HepG2 (cell line): ENCODE measurements at regions of chr14 and their contacts with region 1.

Region 1: DNA sequence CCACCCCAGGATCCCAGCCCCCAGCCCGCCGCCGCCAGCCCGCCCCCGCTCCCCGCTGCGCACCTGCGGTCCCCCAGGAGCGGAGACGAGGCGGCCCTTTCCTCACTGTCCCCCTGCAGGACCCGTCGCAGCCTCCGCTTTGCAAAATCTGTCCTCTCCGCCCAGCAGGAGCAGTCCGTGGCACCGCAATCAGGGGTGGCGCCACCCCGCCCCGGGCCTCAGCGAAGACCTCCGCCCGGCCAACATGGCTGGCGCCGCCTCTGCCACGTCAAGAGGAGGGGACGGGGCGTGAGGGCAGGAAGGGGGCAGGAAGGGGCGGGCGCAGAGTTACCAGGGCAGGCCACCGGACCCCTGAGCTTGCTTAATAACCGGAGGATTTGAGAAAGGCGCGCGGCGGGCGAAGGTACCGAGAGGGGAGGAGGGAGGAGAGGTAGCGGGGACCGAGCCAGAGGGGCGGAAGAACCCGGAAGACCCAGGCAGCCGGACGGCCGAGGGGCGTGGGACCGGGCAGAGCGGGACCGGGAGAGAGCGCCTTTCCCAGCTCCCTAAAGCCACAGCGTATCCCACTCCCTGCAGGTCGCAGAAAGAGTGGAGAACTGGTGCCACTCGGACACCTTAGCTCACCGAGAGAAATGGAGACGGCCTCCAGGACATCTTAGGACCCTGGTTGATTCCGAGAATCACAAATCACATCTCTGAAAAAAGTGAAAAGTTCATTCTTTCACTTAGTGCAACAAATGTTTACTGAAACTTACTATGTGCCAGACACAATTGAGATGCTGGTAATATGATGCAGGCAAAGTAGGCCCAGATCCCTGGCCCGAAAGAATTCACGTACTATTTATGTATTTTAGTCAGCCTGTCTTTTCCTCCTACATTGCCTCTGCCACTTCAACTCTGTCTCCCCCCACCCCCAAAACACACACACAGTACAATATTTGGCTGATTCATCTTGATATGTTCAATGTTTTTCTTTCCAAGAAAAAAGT is at the start of gene SEC23A:
- DNase-seq: peak; percentile 99
- ATAC-seq: peak; percentile 94
- H3K4me3 ChIP-seq: peak within 1 kb of the TSS; percentile 81 to 91 (median 90)
- H3K27ac ChIP-seq: peak within 1 kb of the TSS; percentile 94
- H3K4me1 ChIP-seq: peaks cover 62% of the 10 kb centered on the region
- H3K27me3 ChIP-seq: no peaks in the 10 kb centered on the region; a peak in 1 of 5 replicates
- CTCF ChIP-seq: peak; percentile 69
- EP300 ChIP-seq: peak; percentile 72 to 80; a peak in 3 of 4 replicates
- POLR2A ChIP-seq: peak; percentile 90 to 92
- RAD21 ChIP-seq: peak; percentile 78
- total RNA-seq, gene SEC23A: 887 and 1,365 TPM in 2 replicates

Region 2: GRCh38 chr14:39034481-39035296 is 68.6 kb before region 1 on chr14:
- CTCF ChIA-PET with region 1: no interaction called
- POLR2A ChIA-PET with region 1: interaction called, 13 read pairs
- in situ Hi-C with region 1: no loop called
- intact Hi-C with region 1: no loop called
- DNase-seq: peak; percentile 66
- ATAC-seq: peak; percentile 78
- H3K4me3 ChIP-seq: no peak overlapping the region
- H3K27ac ChIP-seq: no peak overlapping the region
- H3K4me1 ChIP-seq: no peaks in the 10 kb centered on the region
- H3K27me3 ChIP-seq: no peaks in the 10 kb centered on the region
- CTCF ChIP-seq: peak; percentile 75
- EP300 ChIP-seq: no peak
- POLR2A ChIP-seq: no peak
- RAD21 ChIP-seq: peak; percentile 66; the same call in 1 of the 2 replicates

Region 3: DNA sequence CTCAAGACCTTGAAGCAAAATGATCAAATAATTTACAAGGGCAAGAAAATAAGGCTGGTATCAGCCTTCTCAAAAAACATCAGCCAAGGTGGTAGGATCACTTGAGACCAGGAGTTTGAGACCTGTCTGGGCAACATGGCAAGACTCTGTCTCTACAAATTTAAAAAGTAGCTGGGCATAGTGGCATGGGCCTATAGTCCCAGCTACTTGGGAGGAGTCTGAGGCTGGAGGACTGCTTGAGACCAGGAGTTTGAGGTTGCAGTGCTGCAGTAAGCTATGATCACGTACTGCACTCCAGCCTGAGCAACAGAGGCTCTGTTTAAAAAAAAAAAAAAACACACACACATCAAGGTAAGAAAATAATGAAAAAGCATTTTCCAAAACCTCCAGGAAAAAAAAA is 22.4 kb before region 1 on chr14:
- CTCF ChIA-PET with region 1: no interaction called
- POLR2A ChIA-PET with region 1: interaction called, 34 read pairs
- in situ Hi-C with region 1: no loop called
- intact Hi-C with region 1: no loop called
- DNase-seq: no peak
- ATAC-seq: no peak
- H3K4me3 ChIP-seq: no peak overlapping the region
- H3K27ac ChIP-seq: no peak overlapping the region
- H3K4me1 ChIP-seq: no peaks in the 10 kb centered on the region
- H3K27me3 ChIP-seq: no peaks in the 10 kb centered on the region
- CTCF ChIP-seq: no peak
- EP300 ChIP-seq: no peak
- POLR2A ChIP-seq: no peak
- RAD21 ChIP-seq: no peak

Region 4: DNA sequence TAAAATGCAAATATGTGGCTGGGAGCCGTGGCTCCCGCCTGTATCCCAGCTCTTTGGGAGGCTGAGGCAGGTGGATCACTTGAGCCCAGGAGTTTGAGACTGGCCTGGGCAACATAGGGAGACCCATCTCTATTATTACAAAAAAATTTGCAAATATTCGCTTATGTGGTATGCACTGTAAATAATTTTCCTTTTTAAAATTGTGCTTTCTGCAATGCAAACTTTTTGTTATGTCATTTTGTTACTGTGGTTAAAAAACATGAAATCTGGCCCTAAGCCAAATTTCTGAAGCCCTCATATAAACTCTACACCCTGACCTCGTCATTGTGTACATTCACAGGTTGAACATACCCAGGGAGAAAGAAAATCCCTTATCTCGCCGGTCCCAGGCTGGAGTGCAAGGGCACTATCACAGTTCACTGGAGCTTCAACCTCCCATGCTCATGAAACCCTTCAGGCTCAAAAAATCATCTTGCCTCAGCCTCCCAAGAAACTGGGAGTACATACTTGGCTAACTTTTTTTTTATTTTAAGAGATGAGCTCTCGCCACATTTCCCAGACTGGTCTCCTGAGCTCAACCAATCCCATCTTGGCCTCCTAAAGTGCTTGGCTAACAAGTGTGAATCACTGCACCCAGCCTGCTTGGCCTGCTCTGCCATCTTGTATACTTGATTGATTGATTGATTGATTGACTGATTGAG is 42.2 kb after region 1 on chr14:
- CTCF ChIA-PET with region 1: no interaction called
- POLR2A ChIA-PET with region 1: interaction called, 14 read pairs
- in situ Hi-C with region 1: no loop called
- intact Hi-C with region 1: no loop called
- DNase-seq: peak; percentile 93
- ATAC-seq: peak; percentile 99
- H3K4me3 ChIP-seq: no peak overlapping the region
- H3K27ac ChIP-seq: peak overlapping the region; percentile 47
- H3K4me1 ChIP-seq: peaks cover 13% of the 10 kb centered on the region
- H3K27me3 ChIP-seq: no peaks in the 10 kb centered on the region
- CTCF ChIP-seq: no peak
- EP300 ChIP-seq: peak in 1 of 2 experiments; percentile 63; a peak in 3 of 4 replicates
- POLR2A ChIP-seq: 0 out of 4 replicates have a peak, but pooled peaks of 1 of the 2 experiments have one; percentile 3
- RAD21 ChIP-seq: peak; percentile 39; the same call in 1 of the 2 replicates

Region 5: GRCh38 chr14:39181026-39181692 is 77.9 kb after region 1 on chr14:
- CTCF ChIA-PET with region 1: no interaction called
- POLR2A ChIA-PET with region 1: interaction called, 15 read pairs
- in situ Hi-C with region 1: no loop called
- intact Hi-C with region 1: no loop called
- DNase-seq: no peak
- ATAC-seq: peak; percentile 14
- H3K4me3 ChIP-seq: no peak overlapping the region
- H3K27ac ChIP-seq: no peak overlapping the region
- H3K4me1 ChIP-seq: peaks cover 52% of the 10 kb centered on the region
- H3K27me3 ChIP-seq: no peaks in the 10 kb centered on the region
- CTCF ChIP-seq: no peak
- EP300 ChIP-seq: no peak
- POLR2A ChIP-seq: peak; percentile 46 to 48; a peak in 3 of 4 replicates
- RAD21 ChIP-seq: 0 out of 2 replicates have a peak, but pooled peaks have one; percentile 31

Region 6: DNA sequence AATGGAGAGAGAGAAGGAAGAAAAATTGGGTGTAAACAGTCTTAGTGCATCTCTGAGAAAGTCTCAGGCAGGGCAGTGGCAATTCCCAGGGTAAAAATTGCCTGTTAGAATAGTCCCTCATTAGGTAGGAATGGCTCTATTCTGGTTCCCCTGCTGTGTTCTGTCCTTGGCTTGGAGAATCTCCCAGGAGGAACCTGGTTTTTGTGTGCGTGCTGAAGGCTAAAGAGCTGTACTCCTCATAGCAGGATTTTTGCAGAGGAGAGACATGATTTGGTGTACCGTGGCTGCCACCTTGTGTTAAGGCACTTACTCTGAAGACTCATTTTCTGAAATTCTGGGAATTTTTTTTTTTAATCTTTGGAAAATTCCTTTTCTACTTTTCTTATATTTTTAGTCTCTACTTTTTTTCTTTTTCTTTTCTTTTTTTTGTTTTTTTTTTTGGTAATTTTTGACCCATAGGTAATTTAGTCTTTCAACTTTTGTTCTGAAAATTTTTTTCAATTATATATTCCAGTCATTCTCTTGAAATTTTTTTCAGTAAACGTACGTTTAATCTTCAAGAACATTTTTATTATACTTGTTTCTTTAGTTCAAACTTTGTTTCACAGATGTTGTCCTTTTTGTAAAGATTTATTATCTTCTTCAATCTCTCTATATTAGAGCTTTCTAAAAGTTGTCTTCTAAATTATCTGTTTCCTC is 265.1 kb after region 1 on chr14:
- CTCF ChIA-PET with region 1: interaction called, 19 read pairs
- POLR2A ChIA-PET with region 1: interaction called, 4 read pairs
- in situ Hi-C with region 1: loop called (anchors 5 kb)
- intact Hi-C with region 1: loop called (anchors 1 kb)
- DNase-seq: peak; percentile 88
- ATAC-seq: peak; percentile 77
- H3K4me3 ChIP-seq: no peak overlapping the region
- H3K27ac ChIP-seq: no peak overlapping the region
- H3K4me1 ChIP-seq: peaks cover 5% of the 10 kb centered on the region; the same call in 1 of the 2 replicates
- H3K27me3 ChIP-seq: no peaks in the 10 kb centered on the region
- CTCF ChIP-seq: peak; percentile 82
- EP300 ChIP-seq: no peak
- POLR2A ChIP-seq: no peak
- RAD21 ChIP-seq: peak; percentile 86

Region 7: GRCh38 chr14:39469094-39469710 is 365.9 kb after region 1 on chr14:
- CTCF ChIA-PET with region 1: no interaction called
- POLR2A ChIA-PET with region 1: interaction called, 6 read pairs
- in situ Hi-C with region 1: no loop called
- intact Hi-C with region 1: loop called (anchors 1 kb)
- DNase-seq: peak; percentile 74
- ATAC-seq: peak; percentile 93
- H3K4me3 ChIP-seq: peak overlapping the region in 1 of 3 experiments; percentile 14; a peak in 1 of 6 replicates
- H3K27ac ChIP-seq: no peak overlapping the region
- H3K4me1 ChIP-seq: peaks cover 10% of the 10 kb centered on the region
- H3K27me3 ChIP-seq: no peaks in the 10 kb centered on the region
- CTCF ChIP-seq: peak; percentile 94
- EP300 ChIP-seq: no peak
- POLR2A ChIP-seq: no peak
- RAD21 ChIP-seq: peak; percentile 78